ENCODE measurements at regions of chr4 and their contacts with region 1.

Region 1: DNA sequence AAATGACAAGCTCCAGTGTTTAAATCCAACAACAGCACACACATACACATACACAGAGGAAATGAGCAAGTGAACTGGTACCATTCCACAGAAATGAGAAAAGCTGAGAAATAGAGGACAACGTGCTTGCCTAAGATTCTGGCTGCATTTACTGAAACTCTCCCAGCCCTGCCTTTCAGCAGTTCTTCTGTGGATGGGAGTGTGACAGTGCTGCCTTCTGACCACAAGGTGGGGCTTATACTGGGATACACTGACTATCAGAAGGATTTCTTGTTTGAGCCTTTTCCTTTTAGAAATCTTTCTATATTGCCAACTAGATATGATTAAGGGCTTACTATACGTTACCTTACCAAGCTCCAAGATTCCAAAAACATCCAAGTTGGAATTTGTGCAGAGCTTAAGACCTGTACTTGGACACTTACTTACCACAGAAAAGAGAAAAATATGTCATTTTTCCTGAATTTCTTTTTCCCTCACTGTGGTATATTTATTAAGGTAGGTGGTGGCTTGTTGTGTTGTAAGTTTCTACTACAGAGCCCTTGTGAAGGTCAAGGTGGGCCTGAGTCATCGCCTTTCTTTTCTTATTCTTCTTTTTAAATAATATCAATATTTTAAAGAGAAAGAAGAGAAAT is 10.7 kb upstream of the CXCL8 start:
- DNase-seq: peak; percentile 93
- ATAC-seq: peak; percentile 68
- H3K4me3 ChIP-seq: no peak overlapping the region
- H3K27ac ChIP-seq: peak overlapping the region; percentile 97
- H3K4me1 ChIP-seq: peaks cover 79% of the 10 kb centered on the region
- H3K27me3 ChIP-seq: no peaks in the 10 kb centered on the region
- CTCF ChIP-seq: peak; percentile 96

Region 2: DNA sequence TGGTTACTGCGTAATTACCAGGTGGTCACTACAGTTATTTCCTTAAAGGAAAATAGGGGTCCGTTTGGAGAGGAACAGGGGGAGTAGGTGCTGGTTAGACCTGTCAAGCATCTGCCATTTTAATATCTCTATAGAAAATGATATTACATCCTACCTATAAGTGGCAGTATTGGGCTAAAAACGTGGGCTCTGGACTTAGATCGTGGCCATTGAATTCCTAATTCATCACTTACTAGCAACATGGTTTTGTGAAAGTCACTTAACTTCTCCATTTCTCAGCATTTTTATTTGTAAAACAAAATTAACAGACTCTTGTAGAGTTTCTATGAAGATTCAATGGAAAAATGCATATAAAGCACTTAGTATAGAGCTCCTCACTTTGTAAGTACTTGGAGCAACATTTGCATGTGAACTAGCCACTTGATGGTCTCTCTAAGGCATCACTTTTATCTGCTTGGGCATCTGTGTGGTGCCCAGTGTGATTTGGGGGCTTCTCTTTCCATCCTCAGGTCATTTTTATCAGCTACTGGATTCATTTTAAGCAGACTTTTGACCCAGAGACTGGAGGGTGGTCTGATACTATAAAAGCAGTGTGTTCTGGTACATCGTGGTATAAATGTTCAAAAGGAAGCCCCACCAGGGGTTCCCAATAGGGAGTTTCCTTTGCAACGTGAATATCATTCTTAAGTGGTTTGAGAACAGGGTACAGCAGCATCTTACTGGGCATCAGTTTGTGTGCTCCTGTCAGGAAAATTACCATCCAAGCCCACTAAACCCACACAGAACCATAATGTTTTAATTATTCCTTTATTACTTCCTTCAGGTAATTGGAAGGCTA is 66.7 kb before region 1 on chr4:
- CTCF ChIA-PET with region 1: interaction called, 4 read pairs
- POLR2A ChIA-PET with region 1: no interaction called
- intact Hi-C with region 1: loop called (anchors 1 kb)
- DNase-seq: peak; percentile 91
- ATAC-seq: peak; percentile 82
- H3K4me3 ChIP-seq: no peak overlapping the region
- H3K27ac ChIP-seq: peak overlapping the region; percentile 75
- H3K4me1 ChIP-seq: peaks cover 40% of the 10 kb centered on the region
- H3K27me3 ChIP-seq: no peaks in the 10 kb centered on the region
- CTCF ChIP-seq: peak; percentile 91

Region 3: DNA sequence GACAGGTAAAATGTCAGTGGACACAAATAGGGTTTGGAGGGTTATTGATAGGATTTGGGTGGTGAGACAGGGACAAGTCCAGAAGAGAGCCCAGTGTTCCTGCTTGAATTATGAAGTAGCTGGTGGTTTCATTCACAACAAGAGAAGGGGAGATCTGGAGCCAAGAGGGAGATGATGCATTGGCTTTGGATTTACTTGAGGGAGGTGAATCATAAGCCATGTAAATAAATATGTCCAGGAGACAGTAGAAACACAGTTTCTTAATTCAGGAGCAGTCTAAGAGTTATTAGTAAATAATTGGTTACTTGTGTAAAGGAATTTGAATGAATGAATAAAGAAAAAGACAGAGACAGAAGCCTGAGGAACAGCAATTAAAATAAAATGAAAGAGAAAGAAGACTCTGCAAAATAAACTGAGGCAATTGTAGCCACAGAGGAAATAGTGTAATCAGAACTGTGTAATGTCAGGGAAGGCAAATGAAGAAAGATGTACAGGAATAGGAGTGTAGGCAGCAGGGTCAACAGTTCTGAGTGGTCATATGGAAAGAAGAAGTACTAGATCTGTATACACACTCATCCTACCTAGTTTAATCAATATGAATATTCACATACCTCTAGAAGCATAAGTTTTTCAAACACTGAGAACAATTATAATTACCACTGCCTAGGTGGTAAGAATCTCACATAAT is 39.5 kb before region 1 on chr4:
- CTCF ChIA-PET with region 1: no interaction called
- POLR2A ChIA-PET with region 1: no interaction called
- intact Hi-C with region 1: no loop called
- DNase-seq: peak; percentile 89
- ATAC-seq: peak; percentile 79
- H3K4me3 ChIP-seq: no peak overlapping the region
- H3K27ac ChIP-seq: peak overlapping the region; percentile 94
- H3K4me1 ChIP-seq: peaks cover 48% of the 10 kb centered on the region
- H3K27me3 ChIP-seq: no peaks in the 10 kb centered on the region
- CTCF ChIP-seq: no peak

Region 4: GRCh38 chr4:73704314-73705055 is 25.2 kb before region 1 on chr4:
- CTCF ChIA-PET with region 1: interaction called, 3 read pairs
- POLR2A ChIA-PET with region 1: no interaction called
- intact Hi-C with region 1: loop called (anchors 2 kb)
- DNase-seq: peak; percentile 100
- ATAC-seq: peak; percentile 62
- H3K4me3 ChIP-seq: 0 out of 2 replicates have a peak overlapping the region, but pooled peaks have one; percentile 6
- H3K27ac ChIP-seq: peak overlapping the region; percentile 96
- H3K4me1 ChIP-seq: peaks cover 80% of the 10 kb centered on the region
- H3K27me3 ChIP-seq: no peaks in the 10 kb centered on the region
- CTCF ChIP-seq: no peak

Region 5: GRCh38 chr4:73864365-73864764 is 134.7 kb after region 1 on chr4:
- CTCF ChIA-PET with region 1: interaction called, 9 read pairs
- POLR2A ChIA-PET with region 1: interaction called, 4 read pairs
- intact Hi-C with region 1: loop called (anchors 1 kb)
- DNase-seq: peak; percentile 73
- ATAC-seq: peak; percentile 11; the same call in 1 of the 2 replicates
- H3K4me3 ChIP-seq: peak overlapping the region; percentile 6; the same call in 1 of the 2 replicates
- H3K27ac ChIP-seq: peak overlapping the region; percentile 82
- H3K4me1 ChIP-seq: peaks cover 70% of the 10 kb centered on the region
- H3K27me3 ChIP-seq: no peaks in the 10 kb centered on the region
- CTCF ChIP-seq: peak; percentile 93

Region 6: DNA sequence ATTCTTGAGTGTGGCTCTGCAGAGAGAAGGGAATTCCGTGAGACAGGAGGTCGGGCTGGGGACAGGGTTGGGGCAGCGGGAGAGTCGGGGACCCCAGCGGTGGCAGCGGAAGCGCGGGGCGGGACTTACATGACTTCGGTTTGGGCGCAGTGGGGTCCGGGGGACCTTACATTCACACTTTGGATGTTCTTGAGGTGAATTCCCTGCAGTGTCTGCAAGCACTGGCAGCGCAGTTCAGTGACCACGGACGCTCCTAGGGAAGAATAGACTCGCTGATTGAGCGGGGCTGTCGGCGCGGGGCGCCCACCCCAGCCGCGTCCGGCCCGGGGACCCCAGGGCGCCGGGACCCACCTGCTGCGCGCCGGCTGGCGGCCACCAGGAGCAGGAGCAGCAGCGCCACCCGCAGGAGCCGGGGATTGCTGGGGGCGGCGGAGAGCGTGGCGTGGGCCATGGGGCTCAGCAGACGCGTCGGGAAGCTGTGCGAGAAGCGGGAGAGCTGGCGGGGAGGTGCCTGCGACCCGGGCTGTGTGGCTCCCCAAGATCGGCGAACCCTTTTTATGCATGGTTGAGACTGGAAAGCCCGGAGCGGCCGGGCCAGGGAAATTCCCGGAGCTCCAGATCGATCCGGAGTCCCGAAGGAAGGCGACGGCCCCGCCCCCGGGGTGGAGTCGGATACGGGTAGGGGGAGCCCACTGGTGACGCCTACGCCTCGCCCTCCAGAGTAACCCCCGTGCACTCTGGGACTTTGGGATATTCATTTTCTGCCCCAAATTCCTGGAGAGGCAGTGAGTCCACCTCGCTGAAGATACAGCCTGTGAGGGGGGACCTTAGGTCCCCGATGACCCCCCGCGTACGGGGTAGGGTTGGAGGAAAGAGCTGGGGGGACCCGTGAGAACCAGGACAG is 308.8 kb after region 1 on chr4 and contains the start of gene CXCL3:
- CTCF ChIA-PET with region 1: no interaction called
- POLR2A ChIA-PET with region 1: no interaction called
- intact Hi-C with region 1: loop called (anchors 5 kb)
- DNase-seq: peak; percentile 78
- ATAC-seq: peak; percentile 86
- H3K4me3 ChIP-seq: peak within 1 kb of the TSS; percentile 78
- H3K27ac ChIP-seq: peak within 1 kb of the TSS; percentile 51
- H3K4me1 ChIP-seq: peaks cover 48% of the 10 kb centered on the region
- H3K27me3 ChIP-seq: no peaks in the 10 kb centered on the region
- CTCF ChIP-seq: peak; percentile 75
- total RNA-seq, gene CXCL3: 25.1 and 28.9 TPM in 2 replicates

Measured in PC-3 (cell line).